HepG2 (cell line): ENCODE measurements at regions of chr11 and their contacts with region 1.

Region 1: GRCh38 chr11:86608251-86608799 is 64.1 kb downstream of the ME3 start:
- DNase-seq: peak; percentile 60
- ATAC-seq: peak; percentile 93
- H3K4me3 ChIP-seq: no peak overlapping the region
- H3K27ac ChIP-seq: no peak overlapping the region
- H3K4me1 ChIP-seq: 0 out of 2 replicates have a peak, but pooled peaks cover 4% of the 10 kb centered on the region
- H3K27me3 ChIP-seq: no peaks in the 10 kb centered on the region
- CTCF ChIP-seq: peak; percentile 78
- EP300 ChIP-seq: no peak
- POLR2A ChIP-seq: no peak
- RAD21 ChIP-seq: peak; percentile 56

Region 2: DNA sequence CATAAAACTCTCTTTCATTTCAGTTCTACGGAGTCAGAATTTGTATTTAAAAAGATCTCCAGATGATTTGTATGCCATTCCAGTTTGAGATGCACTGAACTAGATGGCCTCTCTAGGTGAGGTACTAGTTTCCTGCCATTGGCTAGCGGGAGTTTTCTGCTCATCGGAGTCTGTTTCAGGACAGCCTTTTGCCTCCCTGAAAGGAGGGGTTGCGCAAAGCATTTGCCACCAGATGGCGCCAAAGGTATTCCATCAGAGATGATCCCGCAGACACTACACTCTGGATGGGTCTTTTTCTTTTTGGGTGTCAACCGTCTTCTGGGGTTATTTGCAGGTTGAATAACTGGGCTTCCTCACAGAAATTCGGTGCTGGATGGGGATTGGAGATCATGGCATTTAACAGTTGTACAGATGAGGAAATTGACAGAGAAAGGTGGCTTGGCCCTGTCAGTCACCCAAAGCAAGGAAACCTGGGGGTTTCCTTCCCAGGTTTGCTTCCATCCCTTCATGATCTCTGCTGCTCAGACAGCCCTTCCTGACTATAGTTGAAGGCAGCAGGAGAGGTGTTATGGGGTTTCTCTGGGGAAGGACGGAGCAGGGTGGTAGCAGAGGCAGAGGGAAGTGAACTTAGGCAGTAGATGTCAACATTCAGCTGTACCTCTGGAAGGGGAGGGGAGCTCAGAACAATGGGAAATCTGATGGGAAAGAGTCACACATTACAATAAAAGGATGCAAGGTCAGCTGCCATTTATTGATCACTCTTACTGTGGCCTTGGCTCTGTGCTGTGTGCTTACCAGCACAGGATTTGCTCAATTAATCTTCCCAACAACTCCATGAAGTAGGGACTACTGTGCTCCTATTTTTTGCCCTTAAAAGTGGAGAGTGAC is 152.0 kb before region 1 on chr11:
- CTCF ChIA-PET with region 1: interaction called, 30 read pairs
- POLR2A ChIA-PET with region 1: no interaction called
- in situ Hi-C with region 1: no loop called
- intact Hi-C with region 1: loop called (anchors 1 kb)
- DNase-seq: peak; percentile 66
- ATAC-seq: peak; percentile 96
- H3K4me3 ChIP-seq: no peak overlapping the region
- H3K27ac ChIP-seq: no peak overlapping the region
- H3K4me1 ChIP-seq: no peaks in the 10 kb centered on the region
- H3K27me3 ChIP-seq: no peaks in the 10 kb centered on the region
- CTCF ChIP-seq: peak; percentile 92
- EP300 ChIP-seq: no peak
- POLR2A ChIP-seq: no peak
- RAD21 ChIP-seq: peak; percentile 86

Region 3: DNA sequence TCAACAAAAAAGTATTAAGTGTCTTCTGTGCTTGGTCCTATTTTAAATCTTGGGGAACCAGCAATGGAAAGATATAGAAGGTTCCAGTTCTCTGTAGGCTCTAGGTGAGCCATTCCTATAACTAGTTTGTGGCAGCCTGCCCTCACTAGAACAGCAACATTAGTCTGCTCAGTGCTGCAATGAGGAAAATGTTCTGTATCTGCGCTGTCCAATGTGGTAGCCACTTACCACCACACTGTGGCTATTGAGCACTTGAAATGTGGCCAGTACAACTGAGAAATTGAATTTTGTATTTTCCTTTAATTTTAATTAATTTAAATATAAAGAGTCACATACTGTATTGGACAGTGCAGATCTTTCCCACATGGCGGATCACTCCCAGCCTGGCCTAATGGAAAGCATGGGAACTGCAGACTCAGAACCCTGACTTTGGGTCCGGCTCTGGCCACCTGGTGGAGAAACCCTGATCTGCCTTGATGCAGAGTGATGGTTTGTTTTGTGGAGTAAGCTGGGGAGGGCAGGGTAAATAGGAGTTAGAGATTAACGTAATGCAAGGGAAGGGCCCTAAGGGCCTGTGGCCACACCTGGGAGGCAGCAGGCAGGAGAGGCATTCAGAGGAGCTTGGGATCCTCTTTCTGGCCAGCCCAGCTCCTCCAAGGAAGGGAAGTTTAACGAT is 36.9 kb before region 1 on chr11:
- CTCF ChIA-PET with region 1: interaction called, 6 read pairs
- POLR2A ChIA-PET with region 1: no interaction called
- in situ Hi-C with region 1: no loop called
- intact Hi-C with region 1: loop called (anchors 1 kb)
- DNase-seq: peak; percentile 69
- ATAC-seq: peak; percentile 100
- H3K4me3 ChIP-seq: no peak overlapping the region
- H3K27ac ChIP-seq: no peak overlapping the region
- H3K4me1 ChIP-seq: no peaks in the 10 kb centered on the region
- H3K27me3 ChIP-seq: 0 out of 5 replicates have a peak, but pooled peaks cover under 1 to 3% of the 10 kb centered on the region in 2 experiments
- CTCF ChIP-seq: peak; percentile 68
- EP300 ChIP-seq: no peak
- POLR2A ChIP-seq: no peak
- RAD21 ChIP-seq: peak; percentile 67; the same call in 1 of the 2 replicates

Region 4: DNA sequence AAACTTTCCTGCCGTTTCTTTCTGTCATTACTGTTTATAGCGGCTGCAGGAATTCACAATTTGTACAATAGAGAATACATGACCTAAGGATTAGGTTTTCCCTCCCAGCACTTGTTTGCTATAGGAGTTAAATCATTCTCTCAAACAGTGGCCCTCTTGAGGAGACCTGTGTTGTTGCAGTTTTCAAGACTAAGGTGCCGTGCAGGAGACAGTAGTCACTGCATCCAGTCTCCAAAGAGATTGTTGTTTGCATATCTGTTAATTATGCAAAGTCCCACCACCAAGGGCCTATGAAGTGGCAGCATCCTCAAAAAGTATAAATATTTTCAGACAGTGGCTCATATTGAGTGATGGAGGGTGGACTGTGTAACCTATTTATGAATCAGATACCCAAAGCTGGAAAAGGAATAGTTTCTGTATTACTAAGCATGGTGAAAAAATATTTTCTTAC is 194.3 kb after region 1 on chr11:
- CTCF ChIA-PET with region 1: no interaction called
- POLR2A ChIA-PET with region 1: no interaction called
- in situ Hi-C with region 1: no loop called
- intact Hi-C with region 1: loop called (anchors 1 kb)
- DNase-seq: peak; percentile 40
- ATAC-seq: peak; percentile 74
- H3K4me3 ChIP-seq: no peak overlapping the region
- H3K27ac ChIP-seq: no peak overlapping the region
- H3K4me1 ChIP-seq: peaks cover 6% of the 10 kb centered on the region; the same call in 1 of the 2 replicates
- H3K27me3 ChIP-seq: peaks cover 8 to 36% of the 10 kb centered on the region in 2 experiments; a peak in 4 of 5 replicates
- CTCF ChIP-seq: peak; percentile 39
- EP300 ChIP-seq: no peak
- POLR2A ChIP-seq: no peak
- RAD21 ChIP-seq: no peak